ENCODE measurements at regions of chr19 and their contacts with region 1.

Region 1: DNA sequence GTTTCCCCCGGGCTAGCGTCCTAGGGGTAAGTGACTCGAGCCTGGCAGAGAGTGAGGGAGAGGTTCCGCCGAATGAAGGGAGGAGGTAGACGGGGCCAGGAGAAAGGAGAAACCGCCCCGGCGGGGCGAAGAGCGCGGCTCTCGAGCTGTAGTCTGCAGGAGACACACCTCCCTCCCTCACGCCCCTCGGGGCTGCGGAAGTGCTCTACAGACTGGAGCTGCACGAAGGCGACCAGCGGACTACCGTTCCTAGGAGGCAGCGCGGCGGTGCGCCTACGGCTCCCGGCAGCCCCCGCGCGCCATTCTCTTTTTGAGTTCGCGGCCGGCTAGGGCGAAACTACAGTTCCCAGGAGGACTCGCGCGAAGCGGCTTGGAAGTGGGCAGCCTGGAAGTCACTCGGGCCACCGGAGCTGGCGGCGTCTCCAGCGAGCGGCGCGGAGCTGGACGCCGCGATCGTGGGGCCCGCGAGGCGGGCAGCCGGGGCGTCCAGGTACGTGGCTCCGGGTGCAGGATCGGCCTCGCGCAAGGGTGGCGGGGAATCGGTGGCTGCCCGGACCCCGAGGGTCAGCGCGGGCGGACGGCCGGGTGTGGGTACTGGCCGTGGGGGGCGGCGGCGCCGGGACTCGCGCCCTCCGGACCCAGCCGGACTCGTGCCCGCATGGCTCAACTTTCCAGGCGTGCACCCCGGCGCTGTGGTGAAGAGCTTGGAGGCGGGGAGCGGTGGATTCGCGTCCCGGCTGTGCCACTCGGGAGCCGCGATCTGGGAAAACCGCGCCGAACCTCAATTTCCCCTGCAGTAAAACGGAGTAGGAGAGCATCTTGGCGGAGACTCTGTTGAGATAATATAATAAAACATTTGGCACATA is at the start of gene SIPA1L3:
- DNase-seq: peak; percentile 99
- ATAC-seq: peak; percentile 91 to 97
- H3K4me3 ChIP-seq: peak within 1 kb of the TSS; percentile 69
- H3K27ac ChIP-seq: peak within 1 kb of the TSS; percentile 83 to 87
- H3K4me1 ChIP-seq: peaks cover 30% of the 10 kb centered on the region
- CTCF ChIP-seq: no peak; the same call in 2 of the 3 replicates
- EP300 ChIP-seq: no peak; a peak in 1 of 5 replicates
- POLR2A ChIP-seq: peak; percentile 74
- RAD21 ChIP-seq: peak; percentile 16 to 45
- polyA plus RNA-seq, gene SIPA1L3: 28.9 and 47.8 TPM in 2 replicates

Region 2: DNA sequence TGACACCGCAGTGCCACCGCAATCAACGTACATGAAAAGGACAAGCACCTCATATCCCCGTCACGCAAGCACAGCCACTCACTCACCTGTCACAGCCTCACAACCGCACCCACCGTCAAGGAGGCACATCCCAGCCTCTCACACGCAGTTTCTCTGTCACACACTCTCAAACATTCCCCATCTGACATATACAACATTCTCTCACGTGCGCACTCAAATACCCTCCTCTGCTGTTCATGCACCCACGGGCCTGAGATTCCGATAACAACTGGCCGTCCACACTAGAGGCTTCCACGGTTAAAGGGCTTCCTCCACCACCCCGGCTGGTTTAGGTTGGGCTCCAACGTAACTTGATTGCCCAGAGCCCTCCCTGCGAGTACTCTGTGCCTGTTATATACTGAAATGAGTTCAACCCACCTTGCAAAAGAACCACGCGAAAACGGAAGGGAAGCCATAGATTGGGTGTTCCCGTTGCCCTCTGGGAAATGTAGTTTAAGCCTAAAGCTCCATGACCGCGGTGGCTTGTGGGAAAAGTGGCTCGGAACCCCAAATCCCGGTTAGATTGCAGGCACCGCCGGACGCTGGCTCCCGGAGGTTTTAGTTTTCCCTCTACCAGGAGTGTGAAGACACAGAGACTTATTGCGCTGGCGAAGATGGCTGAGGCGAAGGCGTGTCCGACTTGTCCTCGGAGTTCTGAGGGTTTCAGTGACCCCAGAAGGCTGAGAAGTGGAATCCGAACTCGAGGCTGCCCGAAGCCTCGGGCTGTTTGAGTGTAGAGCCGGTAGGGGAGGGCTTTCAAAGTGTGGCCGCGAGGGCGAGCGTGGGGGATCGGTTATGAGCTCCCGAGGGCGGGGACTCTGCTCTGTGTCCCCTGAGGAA is 127.7 kb before region 1 on chr19 and contains the start of gene ZNF573:
- CTCF ChIA-PET with region 1: no interaction called
- POLR2A ChIA-PET with region 1: no interaction called
- DNase-seq: peak; percentile 96 to 98
- ATAC-seq: peak; percentile 98
- H3K4me3 ChIP-seq: peak within 1 kb of the TSS; percentile 59
- H3K27ac ChIP-seq: peak within 1 kb of the TSS; percentile 72 to 83
- H3K4me1 ChIP-seq: no peaks in the 10 kb centered on the region
- CTCF ChIP-seq: no peak
- EP300 ChIP-seq: no peak
- POLR2A ChIP-seq: no peak; the same call in none of the 2 replicates
- RAD21 ChIP-seq: no peak
- polyA plus RNA-seq, gene ZNF573: 5.8 and 8.5 TPM in 2 replicates

Region 3: GRCh38 chr19:37948362-37948761 is 41.3 kb after region 1 on chr19:
- CTCF ChIA-PET with region 1: interaction called, 40 read pairs
- POLR2A ChIA-PET with region 1: no interaction called
- DNase-seq: no peak
- ATAC-seq: peak in 1 of 2 experiments; percentile 13; a peak in 3 of 6 replicates
- H3K4me3 ChIP-seq: no peak overlapping the region
- H3K27ac ChIP-seq: peak overlapping the region; percentile 8 to 56; a peak in 3 of 6 replicates
- H3K4me1 ChIP-seq: peaks cover 66% of the 10 kb centered on the region
- CTCF ChIP-seq: no peak
- EP300 ChIP-seq: no peak
- POLR2A ChIP-seq: no peak
- RAD21 ChIP-seq: no peak

Region 4: DNA sequence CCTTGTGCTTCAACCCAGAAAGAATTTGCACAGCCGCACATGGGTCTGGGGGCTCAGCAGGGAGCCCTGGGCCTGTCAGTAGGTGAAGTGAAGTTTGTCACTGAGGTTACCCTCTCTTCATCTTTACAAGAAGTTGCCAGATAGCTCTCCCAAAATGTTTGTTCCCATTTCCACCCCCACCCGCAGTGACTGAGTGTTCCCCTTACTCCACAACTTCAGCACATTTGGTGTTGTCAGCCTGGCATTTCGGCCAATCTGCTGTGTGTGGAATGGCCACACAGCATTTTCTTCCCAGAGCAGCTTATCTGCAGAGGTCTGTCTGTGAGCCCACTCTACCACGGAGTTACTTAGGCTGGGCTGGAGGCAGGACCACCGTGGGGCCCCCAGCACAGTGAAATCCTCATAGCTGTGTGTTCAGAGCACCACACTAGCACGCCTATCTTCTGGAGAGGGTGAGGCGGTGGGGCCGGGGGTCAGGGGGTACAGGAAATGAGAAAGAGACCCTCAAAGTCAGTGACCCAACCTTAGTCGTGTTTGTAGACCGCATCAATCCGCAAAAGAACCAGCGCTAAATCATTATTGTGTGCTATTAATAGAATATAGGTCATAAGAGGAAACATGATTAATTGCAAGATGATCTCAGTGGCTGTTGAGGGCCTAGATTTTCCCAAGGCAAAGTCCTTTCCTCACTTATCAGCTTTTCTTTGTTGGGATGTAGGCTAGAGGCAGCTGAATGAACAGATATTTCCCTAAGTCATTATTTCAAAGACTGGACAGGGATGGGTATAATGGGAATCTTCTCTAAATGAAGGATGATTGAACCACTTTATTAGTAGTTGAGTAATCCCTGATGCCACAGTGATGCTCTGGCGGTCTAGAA is 115.9 kb after region 1 on chr19:
- CTCF ChIA-PET with region 1: interaction called, 316 read pairs
- POLR2A ChIA-PET with region 1: no interaction called
- DNase-seq: no peak
- ATAC-seq: no peak
- H3K4me3 ChIP-seq: no peak overlapping the region
- H3K27ac ChIP-seq: peak overlapping the region in 1 of 2 experiments; percentile 21; a peak in 2 of 6 replicates
- H3K4me1 ChIP-seq: peaks cover 12% of the 10 kb centered on the region; the same call in 2 of the 3 replicates
- CTCF ChIP-seq: no peak
- EP300 ChIP-seq: no peak
- POLR2A ChIP-seq: no peak
- RAD21 ChIP-seq: no peak

Region 5: GRCh38 chr19:38107129-38107528 is 200.0 kb after region 1 on chr19:
- CTCF ChIA-PET with region 1: interaction called, 70 read pairs
- POLR2A ChIA-PET with region 1: interaction called, 3 read pairs
- DNase-seq: no peak
- ATAC-seq: peak in 1 of 2 experiments; percentile 8; a peak in 1 of 6 replicates
- H3K4me3 ChIP-seq: no peak overlapping the region
- H3K27ac ChIP-seq: peak overlapping the region in 1 of 2 experiments; percentile 5; a peak in 1 of 6 replicates
- H3K4me1 ChIP-seq: peaks cover 9% of the 10 kb centered on the region; the same call in 2 of the 3 replicates
- CTCF ChIP-seq: no peak
- EP300 ChIP-seq: no peak
- POLR2A ChIP-seq: no peak
- RAD21 ChIP-seq: no peak

Region 6: DNA sequence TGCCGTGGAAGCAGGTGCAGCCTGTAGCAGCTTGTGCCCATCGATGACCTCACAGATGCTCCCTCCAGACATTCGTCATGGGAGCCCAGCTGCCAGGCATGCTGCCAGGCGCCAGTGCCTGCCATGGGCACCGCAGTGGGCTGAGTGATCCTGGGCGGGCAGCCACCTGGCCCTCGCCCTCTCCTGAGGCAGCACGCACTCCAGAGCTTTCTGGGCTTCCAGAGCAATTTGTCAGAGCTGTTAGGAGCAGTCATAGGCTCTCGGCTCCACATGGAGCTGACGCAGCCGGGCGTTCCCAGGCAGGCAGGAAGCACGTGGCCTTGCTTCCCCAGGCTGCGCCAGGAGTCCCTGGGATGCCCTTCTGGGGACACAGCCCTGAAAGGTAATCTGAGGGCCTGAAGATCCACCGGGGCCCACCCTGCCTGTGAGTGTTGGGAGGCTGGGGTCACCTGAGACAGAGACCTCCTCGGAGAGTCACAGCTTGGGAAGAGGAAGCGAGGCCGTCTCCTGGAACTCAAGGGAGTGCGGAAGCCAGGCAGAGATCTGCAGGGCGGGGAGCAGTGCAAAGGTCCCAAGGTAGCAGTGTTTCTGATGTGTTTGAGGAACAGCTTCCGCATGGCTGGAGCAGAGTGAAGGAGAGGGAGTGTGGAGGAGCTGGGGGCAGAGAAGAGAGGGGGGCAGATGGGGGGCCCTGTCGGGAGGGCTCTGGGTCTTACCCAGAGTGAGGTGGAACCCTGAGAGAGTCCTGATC is 266.4 kb after region 1 on chr19:
- CTCF ChIA-PET with region 1: interaction called, 18 read pairs
- POLR2A ChIA-PET with region 1: no interaction called
- DNase-seq: no peak
- ATAC-seq: peak; percentile 9 to 20; a peak in 3 of 6 replicates
- H3K4me3 ChIP-seq: no peak overlapping the region
- H3K27ac ChIP-seq: no peak overlapping the region
- H3K4me1 ChIP-seq: no peaks in the 10 kb centered on the region
- CTCF ChIP-seq: no peak
- EP300 ChIP-seq: no peak
- POLR2A ChIP-seq: no peak
- RAD21 ChIP-seq: no peak

Region 7: DNA sequence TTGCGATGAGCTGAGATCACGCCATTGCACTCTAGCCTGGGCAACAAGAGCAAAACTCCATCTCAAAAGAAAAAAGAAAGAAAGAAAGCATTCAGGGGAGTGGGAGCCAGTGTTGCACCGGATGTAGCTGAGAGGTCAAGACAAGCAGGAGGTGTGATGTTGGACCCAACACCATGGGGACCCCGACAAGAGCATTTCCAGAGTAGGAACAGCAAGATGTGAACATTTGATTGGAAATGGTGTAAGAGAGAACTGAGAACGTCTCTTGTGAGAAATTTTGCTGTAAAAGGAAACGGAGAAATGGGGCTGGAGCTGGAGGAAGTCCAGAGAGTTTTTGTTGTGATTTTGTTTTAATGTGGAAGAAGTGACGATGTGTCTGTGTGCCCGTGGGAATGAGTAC is 332.7 kb after region 1 on chr19:
- CTCF ChIA-PET with region 1: interaction called, 187 read pairs
- POLR2A ChIA-PET with region 1: no interaction called
- DNase-seq: no peak
- ATAC-seq: no peak
- H3K4me3 ChIP-seq: no peak overlapping the region
- H3K27ac ChIP-seq: no peak overlapping the region
- H3K4me1 ChIP-seq: no peaks in the 10 kb centered on the region
- CTCF ChIP-seq: no peak
- EP300 ChIP-seq: no peak
- POLR2A ChIP-seq: no peak
- RAD21 ChIP-seq: no peak

Region 8: DNA sequence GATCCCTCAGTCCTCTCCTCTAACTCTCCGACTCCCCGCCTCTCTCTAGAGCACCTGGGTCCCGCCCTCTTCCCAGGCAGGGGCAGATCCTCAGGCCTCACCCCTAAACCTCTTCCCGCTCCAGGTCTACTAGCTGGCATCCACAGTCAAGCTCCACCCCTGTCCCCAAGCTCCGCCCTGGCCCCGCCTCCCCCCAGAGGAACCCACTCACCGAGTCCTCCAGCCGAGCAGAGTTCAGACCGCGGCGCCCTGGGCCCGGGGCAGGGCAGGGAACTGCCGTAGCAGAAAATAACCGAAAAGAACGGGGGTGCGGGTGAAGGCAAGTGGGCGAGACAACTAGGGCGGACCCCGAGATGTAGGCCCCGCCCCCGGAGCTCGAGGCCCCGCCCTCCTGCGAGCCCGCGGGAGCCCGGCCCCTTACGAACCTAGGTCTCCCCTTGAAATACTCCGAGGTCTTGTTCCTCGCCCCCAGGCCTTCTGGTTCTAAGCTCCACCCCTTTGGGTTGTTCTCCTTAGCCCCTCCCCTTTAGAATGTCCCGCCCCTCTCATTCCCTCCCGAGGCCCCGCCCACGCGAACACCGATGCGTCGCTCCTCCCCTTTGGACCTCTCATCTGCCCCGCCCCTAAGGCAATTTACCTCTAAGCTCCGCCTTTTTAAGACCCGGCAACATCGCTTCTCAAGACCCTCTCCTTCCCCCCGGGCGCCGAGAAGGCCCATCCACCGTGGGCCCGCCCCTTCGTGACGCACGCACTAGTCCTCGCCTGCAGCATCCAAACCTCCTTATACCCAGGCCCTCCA is 480.6 kb after region 1 on chr19 and contains the start of gene GGN:
- CTCF ChIA-PET with region 1: interaction called, 17 read pairs
- POLR2A ChIA-PET with region 1: no interaction called
- DNase-seq: peak; percentile 98 to 100
- ATAC-seq: peak; percentile 53 to 78
- H3K4me3 ChIP-seq: peak within 1 kb of the TSS; percentile 61
- H3K27ac ChIP-seq: peak within 1 kb of the TSS; percentile 71 to 90
- H3K4me1 ChIP-seq: peaks cover 35% of the 10 kb centered on the region
- CTCF ChIP-seq: no peak
- EP300 ChIP-seq: no peak
- POLR2A ChIP-seq: no peak; the same call in 1 of the 2 replicates
- RAD21 ChIP-seq: no peak
- polyA plus RNA-seq, gene GGN: not detected in 2 replicates

Measured in A549 (cell line).